Right ventricle myocardium inferior (tissue), 1 donor: ENCODE measurements at regions of chr17 and their contacts with region 1.

Region 1: GRCh38 chr17:56715613-56716357 is 117.9 kb downstream of the C17orf67 start:
- DNase-seq: peak; percentile 76
- ATAC-seq: peak; percentile 90

Region 2: GRCh38 chr17:55845385-55845784 is 870.4 kb before region 1 on chr17:
- intact Hi-C with region 1: loop called (anchors 5 kb)
- DNase-seq: peak; percentile 74
- ATAC-seq: peak; percentile 89

Region 3: DNA sequence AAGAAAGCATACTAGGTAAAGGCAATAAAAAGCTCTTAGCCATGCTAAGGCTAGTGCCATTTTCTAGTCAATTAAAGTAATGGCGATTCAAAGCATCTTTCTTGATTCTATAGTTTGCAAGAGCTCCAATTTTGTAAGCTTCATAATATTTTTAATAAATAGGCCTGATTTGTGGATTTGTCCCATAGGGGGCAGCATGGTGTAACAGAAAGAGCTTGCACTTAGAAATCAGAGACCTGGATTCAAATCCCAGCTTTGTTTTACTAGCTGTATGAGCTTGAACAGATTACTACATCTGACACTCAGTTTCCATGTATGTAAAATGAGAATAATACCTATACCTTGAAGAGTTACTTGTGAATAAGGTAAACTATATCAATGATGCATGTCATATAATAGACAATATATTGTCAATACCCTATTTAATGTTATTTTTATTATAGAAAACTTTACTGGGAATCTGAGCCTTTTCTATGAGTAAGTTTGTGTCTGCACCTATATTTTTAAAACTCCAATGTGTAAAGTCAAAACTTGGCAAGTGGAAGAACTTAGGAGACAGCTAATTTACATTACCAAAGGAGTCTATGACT is 215.9 kb before region 1 on chr17:
- intact Hi-C with region 1: loop called (anchors 5 kb)
- DNase-seq: no peak
- ATAC-seq: no peak

Region 4: GRCh38 chr17:56592487-56593085 is 123.2 kb before region 1 on chr17:
- intact Hi-C with region 1: loop called (anchors 1 kb)
- DNase-seq: peak; percentile 80
- ATAC-seq: peak; percentile 82

Region 5: DNA sequence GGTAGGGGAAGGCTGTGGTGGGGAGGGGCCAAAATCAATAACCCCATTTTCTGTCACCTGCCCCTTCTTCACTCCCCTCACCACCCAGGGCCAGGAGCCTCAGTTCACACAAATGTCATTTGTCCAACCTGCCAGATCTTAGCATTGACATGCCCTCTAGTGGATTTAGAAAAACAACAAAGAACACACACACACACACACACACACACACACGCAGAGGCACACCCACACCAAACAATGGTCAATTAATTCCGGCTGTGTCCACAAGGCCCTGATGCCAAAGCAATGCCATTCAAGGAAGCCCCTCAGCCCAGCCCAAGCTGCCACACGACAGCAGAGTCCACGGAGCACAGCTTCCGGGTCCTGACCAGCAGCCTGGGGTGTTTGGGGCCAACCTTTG is 53.9 kb before region 1 on chr17:
- intact Hi-C with region 1: no loop called
- DNase-seq: no peak
- ATAC-seq: no peak

Region 6: GRCh38 chr17:56754523-56755208 is 38.9 kb after region 1 on chr17:
- intact Hi-C with region 1: loop called (anchors 5 kb)
- DNase-seq: no peak
- ATAC-seq: no peak